Activated CD4-positive, alpha-beta T cell treated with anti-CD3 and anti-CD28 coated beads for 36 hours (primary cell): ENCODE measurements at regions of chr6 and their contacts with region 1.

Region 1: DNA sequence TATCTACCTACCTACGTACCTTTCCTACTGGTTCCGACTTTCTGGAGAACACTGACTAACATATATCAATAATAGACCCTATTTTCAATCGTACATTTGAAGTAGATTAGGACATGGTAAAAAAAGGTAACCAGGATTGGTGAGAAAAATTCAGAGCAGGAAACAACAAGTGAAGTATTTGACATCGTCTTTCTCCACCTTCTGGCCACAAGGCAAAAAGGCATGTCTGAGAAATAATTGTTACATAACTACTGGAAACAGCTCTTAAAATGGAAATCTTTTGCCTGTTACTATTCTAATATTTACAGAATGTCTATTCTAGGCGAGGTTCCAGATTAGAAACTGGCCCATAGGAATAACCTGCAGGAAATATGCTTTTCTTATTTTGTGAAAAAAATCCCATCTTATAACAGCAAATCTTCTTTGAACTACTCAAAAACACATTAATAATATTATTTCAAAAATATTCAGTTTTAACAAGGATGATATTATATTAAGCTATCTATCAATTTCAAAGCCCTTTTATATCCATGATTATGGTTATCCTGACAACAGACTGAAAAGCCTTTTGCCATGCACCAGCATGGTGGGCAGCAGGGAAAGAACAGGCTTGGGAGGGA is 80.8 kb downstream of the RCAN2 start:
- DNase-seq: peak; percentile 22
- ATAC-seq: no peak
- H3K4me3 Mint-ChIP-seq: no peak overlapping the region
- H3K27ac Mint-ChIP-seq: no peak overlapping the region
- H3K4me1 Mint-ChIP-seq: no peaks in the 10 kb centered on the region
- H3K27me3 Mint-ChIP-seq: peaks cover 5% of the 10 kb centered on the region

Region 2: GRCh38 chr6:46042355-46042999 is 368.0 kb before region 1 on chr6:
- CTCF ChIA-PET with region 1: no interaction called
- POLR2A ChIA-PET with region 1: no interaction called
- intact Hi-C with region 1: loop called in 1 of 2 experiments (anchors 1 kb)
- DNase-seq: peak; percentile 18
- ATAC-seq: peak; percentile 80
- H3K4me3 Mint-ChIP-seq: no peak overlapping the region
- H3K27ac Mint-ChIP-seq: no peak overlapping the region
- H3K4me1 Mint-ChIP-seq: peaks cover 10% of the 10 kb centered on the region
- H3K27me3 Mint-ChIP-seq: no peaks in the 10 kb centered on the region